GM12878 (cell line): ENCODE measurements at regions of chr13 and their contacts with region 1.

Region 1: GRCh38 chr13:26946684-26947343 is 186.2 kb upstream of the GPR12 start:
- DNase-seq: peak; percentile 16
- ATAC-seq: peak; percentile 95
- H3K4me3 ChIP-seq: no peak overlapping the region
- H3K27ac ChIP-seq: no peak overlapping the region
- H3K4me1 ChIP-seq: no peaks in the 10 kb centered on the region
- H3K27me3 ChIP-seq: peaks cover 0 to 1% of the 10 kb centered on the region in 2 experiments; a peak in 1 of 4 replicates
- CTCF ChIP-seq: peak; percentile 68 to 86 (median 71)
- EP300 ChIP-seq: no peak
- POLR2A ChIP-seq: no peak
- RAD21 ChIP-seq: peak; percentile 82

Region 2: DNA sequence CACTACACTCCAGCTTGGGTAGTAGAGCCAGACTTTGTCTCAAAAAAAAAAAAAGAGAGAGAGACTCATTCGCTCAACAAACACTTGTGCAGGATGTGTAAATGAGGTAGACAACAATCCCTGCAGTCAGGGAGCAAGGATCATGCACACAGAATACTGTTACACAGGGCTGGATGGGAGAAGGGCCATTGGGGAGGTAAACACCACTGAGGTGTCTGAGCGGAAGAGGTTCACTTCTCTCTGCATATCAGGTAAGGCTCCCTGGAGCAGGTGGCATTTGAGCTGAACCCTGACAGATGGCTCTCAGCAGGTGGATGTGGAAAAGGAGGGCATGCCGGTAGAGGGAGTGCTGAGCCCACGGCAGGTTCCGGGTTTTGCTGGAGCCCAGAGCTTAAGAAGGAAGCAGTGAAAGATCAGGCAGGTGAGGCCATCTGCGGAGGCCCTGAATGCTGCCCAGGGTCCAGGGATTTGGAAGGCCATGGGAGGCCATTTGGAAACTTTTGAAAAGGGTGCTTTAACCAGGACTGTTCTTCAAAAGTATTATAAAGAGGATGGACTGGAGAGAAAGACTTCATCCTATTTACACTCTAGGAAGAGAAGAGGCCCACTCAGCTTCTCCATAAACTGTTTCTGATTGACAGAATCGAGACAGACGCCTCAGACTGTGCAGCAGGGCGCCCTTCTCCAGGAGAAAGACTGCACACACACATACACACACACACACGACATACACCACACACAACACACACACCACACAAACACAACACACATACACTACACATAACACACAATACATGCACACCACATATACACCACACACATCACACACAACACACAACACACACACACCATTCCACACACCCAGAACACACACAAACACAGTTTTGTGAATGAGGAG is 25.4 kb after region 1 on chr13:
- CTCF ChIA-PET with region 1: interaction called, 12 read pairs
- POLR2A ChIA-PET with region 1: no interaction called
- RAD21 ChIA-PET with region 1: interaction called, 9 read pairs
- SMC1A ChIA-PET with region 1: interaction called, 4 read pairs
- in situ Hi-C with region 1: no loop called
- intact Hi-C with region 1: no loop called
- DNase-seq: no peak
- ATAC-seq: peak; percentile 84
- H3K4me3 ChIP-seq: no peak overlapping the region
- H3K27ac ChIP-seq: no peak overlapping the region
- H3K4me1 ChIP-seq: no peaks in the 10 kb centered on the region
- H3K27me3 ChIP-seq: no peaks in the 10 kb centered on the region; a peak in 1 of 4 replicates
- CTCF ChIP-seq: peak; percentile 42 to 64 (median 46); a peak in 5 of 6 replicates
- EP300 ChIP-seq: no peak
- POLR2A ChIP-seq: no peak
- RAD21 ChIP-seq: no peak

Region 3: GRCh38 chr13:27283906-27284493 is 337.2 kb after region 1 on chr13:
- CTCF ChIA-PET with region 1: interaction called, 9 read pairs
- POLR2A ChIA-PET with region 1: no interaction called
- RAD21 ChIA-PET with region 1: interaction called, 12 read pairs
- SMC1A ChIA-PET with region 1: interaction called, 4 read pairs
- in situ Hi-C with region 1: no loop called
- intact Hi-C with region 1: no loop called
- DNase-seq: no peak
- ATAC-seq: peak; percentile 92
- H3K4me3 ChIP-seq: no peak overlapping the region
- H3K27ac ChIP-seq: no peak overlapping the region
- H3K4me1 ChIP-seq: no peaks in the 10 kb centered on the region
- H3K27me3 ChIP-seq: no peaks in the 10 kb centered on the region; a peak in 1 of 4 replicates
- CTCF ChIP-seq: peak; percentile 45 to 62 (median 57); a peak in 5 of 6 replicates
- EP300 ChIP-seq: no peak
- POLR2A ChIP-seq: no peak
- RAD21 ChIP-seq: peak; percentile 68